Tibial artery (tissue), 4 donors: ENCODE measurements at regions of chr2 and their contacts with region 1.

Region 1: DNA sequence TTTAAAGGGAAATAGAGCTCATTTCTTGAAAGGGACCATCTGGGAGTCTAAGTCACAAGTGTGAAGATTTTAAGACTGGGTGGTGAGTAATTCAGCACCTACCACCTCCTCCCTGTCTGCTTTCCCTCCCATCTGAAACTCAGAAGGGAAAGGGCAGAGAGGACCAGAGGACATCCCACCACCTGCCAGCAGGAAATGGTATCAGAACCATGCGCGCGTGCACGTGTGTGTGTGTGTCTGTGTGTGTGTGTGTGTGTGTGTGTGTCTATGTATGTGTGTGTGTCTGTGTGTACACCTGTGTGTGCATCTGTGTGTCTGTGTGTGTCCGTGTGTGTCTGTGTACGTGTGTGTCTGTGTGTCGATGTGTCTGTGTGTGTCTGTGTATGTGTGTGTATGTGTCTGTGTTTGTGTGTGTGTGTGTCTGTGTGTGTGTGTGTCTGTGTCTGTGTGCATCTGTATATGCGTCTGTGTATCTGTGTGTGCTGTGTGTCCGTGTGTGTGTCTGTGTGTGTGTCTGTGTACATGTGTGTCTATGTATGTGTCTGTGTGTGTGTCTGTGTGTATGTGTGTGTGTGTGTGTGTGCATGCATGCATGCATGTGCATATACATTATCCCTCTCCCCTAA is 76.8 kb downstream of the ZFP36L2 start:
- DNase-seq: no peak
- H3K4me3 ChIP-seq: no peak overlapping the region
- H3K27ac ChIP-seq: no peak overlapping the region
- H3K4me1 ChIP-seq: peaks cover 0 to 4% (median 0%) of the 10 kb centered on the region in 4 donors
- H3K27me3 ChIP-seq: no peaks in the 10 kb centered on the region
- CTCF ChIP-seq: no peak

Region 2: GRCh38 chr2:43097644-43098408 is 51.8 kb before region 1 on chr2:
- intact Hi-C with region 1: no loop called
- DNase-seq: no peak
- H3K4me3 ChIP-seq: no peak overlapping the region
- H3K27ac ChIP-seq: no peak overlapping the region
- H3K4me1 ChIP-seq: peaks cover 0 to 33% (median 24%) of the 10 kb centered on the region in 4 donors
- H3K27me3 ChIP-seq: no peaks in the 10 kb centered on the region
- CTCF ChIP-seq: no peak

Region 3: GRCh38 chr2:43110442-43110871 is 39.1 kb before region 1 on chr2:
- intact Hi-C with region 1: loop called (anchors 5 kb)
- DNase-seq: peak in 1 of 2 donors; percentile 59
- H3K4me3 ChIP-seq: no peak overlapping the region
- H3K27ac ChIP-seq: peak overlapping the region; percentile 26 to 35
- H3K4me1 ChIP-seq: peaks cover 0 to 52% (median 32%) of the 10 kb centered on the region in 4 donors
- H3K27me3 ChIP-seq: no peaks in the 10 kb centered on the region
- CTCF ChIP-seq: no peak